ENCODE measurements at regions of chr1 and their contacts with region 1.

Region 1: DNA sequence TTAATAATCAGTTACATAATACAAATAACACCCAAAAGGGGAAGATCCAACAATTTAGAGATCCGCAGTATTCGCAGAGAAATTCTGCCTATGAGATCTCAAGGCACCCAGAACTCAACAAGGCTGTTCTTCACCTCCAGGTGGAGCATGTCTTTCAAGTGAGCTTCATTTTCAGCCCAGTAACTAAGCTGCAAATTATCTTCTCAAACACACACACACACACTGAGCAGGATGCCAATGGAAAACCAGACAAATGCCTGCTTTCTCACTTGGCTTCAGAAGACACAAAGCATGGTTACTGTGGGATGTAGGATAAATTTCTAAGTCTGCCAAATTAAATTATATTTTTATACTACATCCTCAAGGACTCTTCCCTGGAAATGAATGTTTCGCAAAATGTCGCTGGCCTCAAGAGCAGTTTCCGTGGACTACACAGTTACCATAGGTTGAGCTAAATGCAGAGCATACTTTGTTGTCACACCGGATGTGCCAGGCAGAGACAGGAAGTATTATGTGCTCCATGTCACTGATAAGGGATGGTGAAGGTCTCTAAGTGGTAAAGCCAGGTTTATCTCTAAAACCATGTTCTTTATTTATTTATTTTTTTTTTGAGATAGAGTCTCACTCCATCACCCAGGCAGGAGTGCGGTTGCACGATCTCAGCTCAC is 30.3 kb downstream of the UBR4 start:
- DNase-seq: peak in 1 of 3 donors; percentile 27
- ATAC-seq: peak; percentile 46
- H3K4me3 ChIP-seq: no peak overlapping the region
- H3K4me1 ChIP-seq: no peaks in the 10 kb centered on the region
- CTCF ChIP-seq: no peak

Region 2: GRCh38 chr1:18322368-18323032 is 857.2 kb before region 1 on chr1:
- intact Hi-C with region 1: no loop called
- DNase-seq: no peak
- ATAC-seq: no peak
- H3K4me3 ChIP-seq: no peak overlapping the region
- H3K4me1 ChIP-seq: no peaks in the 10 kb centered on the region
- CTCF ChIP-seq: no peak

Region 3: GRCh38 chr1:19240673-19241538 is 61.2 kb after region 1 on chr1:
- intact Hi-C with region 1: loop called in 1 of 2 experiments (anchors 5 kb)
- DNase-seq: peak in 2 of 3 donors; percentile 77 to 79
- ATAC-seq: peak; percentile 97
- H3K4me3 ChIP-seq: no peak overlapping the region
- H3K4me1 ChIP-seq: no peaks in the 10 kb centered on the region
- CTCF ChIP-seq: peak; percentile 94